ENCODE measurements at regions of chr19 and their contacts with region 1.

Region 1: DNA sequence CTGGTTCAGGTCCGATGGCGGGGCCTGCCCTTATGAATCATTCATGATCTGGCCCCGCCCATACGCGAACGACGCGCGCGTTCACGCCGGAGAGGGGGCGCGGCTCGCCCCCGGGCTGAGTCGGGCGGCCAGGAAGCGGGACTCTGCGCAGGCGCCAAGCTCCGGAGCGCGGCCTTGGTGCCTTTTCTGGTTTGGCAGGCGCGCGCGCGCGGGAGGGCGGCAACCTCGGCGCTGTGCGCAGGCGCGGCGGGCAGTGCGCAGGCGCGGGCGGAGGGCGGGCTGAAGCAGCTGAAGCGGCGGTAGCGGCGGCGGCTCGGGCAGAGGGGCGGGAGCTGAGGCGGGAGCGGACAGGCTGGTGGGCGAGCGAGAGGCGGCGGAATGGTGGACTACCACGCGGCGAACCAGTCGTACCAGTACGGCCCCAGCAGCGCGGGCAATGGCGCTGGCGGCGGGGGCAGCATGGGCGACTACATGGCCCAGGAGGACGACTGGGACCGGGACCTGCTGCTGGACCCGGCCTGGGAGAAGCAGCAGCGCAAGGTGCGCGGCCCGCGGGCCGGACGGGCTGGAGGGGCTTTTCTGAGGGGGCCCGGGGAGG is at the start of gene ACTN4:
- DNase-seq: peak; percentile 98 to 100 (median 100)
- ATAC-seq: peak; percentile 98
- H3K4me3 ChIP-seq: peak within 1 kb of the TSS; percentile 85
- H3K4me3 Mint-ChIP-seq: peak within 1 kb of the TSS; percentile 74 to 99 (median 89)
- H3K27ac ChIP-seq: peak within 1 kb of the TSS; percentile 69
- H3K27ac Mint-ChIP-seq: peak within 1 kb of the TSS; percentile 74 to 87 (median 84)
- H3K4me1 ChIP-seq: peaks cover 20 to 27% of the 10 kb centered on the region in 2 donors
- H3K4me1 Mint-ChIP-seq: peaks cover 20 to 52% (median 33%) of the 10 kb centered on the region in 7 donors
- H3K27me3 ChIP-seq: peaks cover 0 to 17% of the 10 kb centered on the region in 2 donors
- H3K27me3 Mint-ChIP-seq: peaks cover 0 to 33% (median 19%) of the 10 kb centered on the region in 5 donors
- total RNA-seq, gene ACTN4: 49.2 to 355 (median 54.4) TPM

Region 2: DNA sequence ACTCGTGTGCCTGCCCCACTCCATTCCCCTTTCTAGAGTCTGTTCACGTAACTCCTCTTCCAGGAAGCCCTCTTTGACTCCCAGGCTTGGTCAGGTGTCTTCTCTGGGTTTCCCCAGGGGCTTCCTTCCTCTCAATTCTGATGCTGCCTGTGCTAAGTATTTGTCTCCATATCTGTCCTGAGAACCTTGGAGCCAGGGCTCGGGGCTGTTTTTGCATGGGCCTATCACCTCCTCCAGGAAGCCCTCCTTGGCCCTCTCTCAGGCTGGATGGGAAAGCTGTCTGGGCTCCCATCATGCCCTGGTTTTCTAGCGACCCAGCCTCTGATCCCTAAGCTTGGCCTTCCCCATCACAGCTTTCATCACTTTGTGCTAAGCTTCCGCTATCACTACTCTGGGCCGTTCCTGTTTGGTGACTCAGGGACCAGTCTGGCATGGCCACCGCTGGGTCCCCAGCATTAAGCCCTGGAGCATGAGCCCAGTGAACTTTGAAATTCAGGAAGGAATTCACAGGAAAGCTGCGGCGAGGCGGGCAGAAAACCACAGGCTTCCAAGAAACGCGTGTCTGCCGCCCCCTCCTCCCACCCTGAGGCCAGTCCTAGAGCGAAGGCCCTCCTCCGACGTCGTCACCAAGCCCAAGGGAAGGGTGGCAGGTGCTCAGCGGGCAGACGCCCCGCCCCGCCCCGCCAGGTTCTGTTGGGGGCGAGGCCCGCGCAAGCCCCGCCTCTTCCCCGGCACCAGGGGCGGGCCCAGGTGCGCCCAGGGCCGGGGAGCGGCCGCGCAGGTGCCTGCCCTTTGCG is 383.6 kb before region 1 on chr19:
- CTCF ChIA-PET with region 1: no interaction called
- POLR2A ChIA-PET with region 1: no interaction called
- intact Hi-C with region 1: loop called in 1 of 2 experiments (anchors 1 kb)
- DNase-seq: peak; percentile 71 to 89 (median 80)
- ATAC-seq: peak; percentile 93
- H3K4me3 ChIP-seq: peak overlapping the region; percentile 77
- H3K4me3 Mint-ChIP-seq: peak overlapping the region; percentile 81 to 93 (median 88)
- H3K27ac ChIP-seq: peak overlapping the region; percentile 77
- H3K27ac Mint-ChIP-seq: peak overlapping the region in 8 of 9 donors; percentile 52 to 93 (median 70)
- H3K4me1 ChIP-seq: peaks cover 4 to 10% of the 10 kb centered on the region in 2 donors
- H3K4me1 Mint-ChIP-seq: peaks cover 17 to 44% (median 39%) of the 10 kb centered on the region in 7 donors
- H3K27me3 ChIP-seq: no peaks in the 10 kb centered on the region
- H3K27me3 Mint-ChIP-seq: peaks cover 0 to 5% (median 2%) of the 10 kb centered on the region in 5 donors

Region 3: GRCh38 chr19:38658462-38659306 is 11.2 kb after region 1 on chr19:
- CTCF ChIA-PET with region 1: no interaction called
- POLR2A ChIA-PET with region 1: interaction called, 18 read pairs
- intact Hi-C with region 1: loop called (anchors 1 kb)
- DNase-seq: no peak
- ATAC-seq: no peak
- H3K4me3 ChIP-seq: no peak overlapping the region
- H3K4me3 Mint-ChIP-seq: peak overlapping the region in 4 of 10 donors; percentile 9 to 76 (median 20)
- H3K27ac ChIP-seq: no peak overlapping the region
- H3K27ac Mint-ChIP-seq: no peak overlapping the region
- H3K4me1 ChIP-seq: peaks cover 36 to 67% of the 10 kb centered on the region in 2 donors
- H3K4me1 Mint-ChIP-seq: peaks cover 22 to 73% (median 50%) of the 10 kb centered on the region in 7 donors
- H3K27me3 ChIP-seq: peaks cover 0 to 19% of the 10 kb centered on the region in 2 donors
- H3K27me3 Mint-ChIP-seq: peaks cover 0 to 65% (median 34%) of the 10 kb centered on the region in 5 donors

Region 4: GRCh38 chr19:38736413-38737280 is 89.2 kb after region 1 on chr19:
- CTCF ChIA-PET with region 1: no interaction called
- POLR2A ChIA-PET with region 1: no interaction called
- intact Hi-C with region 1: loop called in 1 of 2 experiments (anchors 5 kb)
- DNase-seq: peak in 6 of 9 donors; percentile 31 to 69 (median 41)
- ATAC-seq: peak; percentile 63
- H3K4me3 ChIP-seq: peak overlapping the region; percentile 24
- H3K4me3 Mint-ChIP-seq: peak overlapping the region; percentile 35 to 83 (median 62)
- H3K27ac ChIP-seq: no peak overlapping the region
- H3K27ac Mint-ChIP-seq: peak overlapping the region in 5 of 9 donors; percentile 13 to 76 (median 36)
- H3K4me1 ChIP-seq: peaks cover 15 to 27% of the 10 kb centered on the region in 2 donors
- H3K4me1 Mint-ChIP-seq: peaks cover 7 to 47% (median 29%) of the 10 kb centered on the region in 7 donors
- H3K27me3 ChIP-seq: no peaks in the 10 kb centered on the region
- H3K27me3 Mint-ChIP-seq: peaks cover 0 to 10% (median 0%) of the 10 kb centered on the region in 5 donors

Region 5: DNA sequence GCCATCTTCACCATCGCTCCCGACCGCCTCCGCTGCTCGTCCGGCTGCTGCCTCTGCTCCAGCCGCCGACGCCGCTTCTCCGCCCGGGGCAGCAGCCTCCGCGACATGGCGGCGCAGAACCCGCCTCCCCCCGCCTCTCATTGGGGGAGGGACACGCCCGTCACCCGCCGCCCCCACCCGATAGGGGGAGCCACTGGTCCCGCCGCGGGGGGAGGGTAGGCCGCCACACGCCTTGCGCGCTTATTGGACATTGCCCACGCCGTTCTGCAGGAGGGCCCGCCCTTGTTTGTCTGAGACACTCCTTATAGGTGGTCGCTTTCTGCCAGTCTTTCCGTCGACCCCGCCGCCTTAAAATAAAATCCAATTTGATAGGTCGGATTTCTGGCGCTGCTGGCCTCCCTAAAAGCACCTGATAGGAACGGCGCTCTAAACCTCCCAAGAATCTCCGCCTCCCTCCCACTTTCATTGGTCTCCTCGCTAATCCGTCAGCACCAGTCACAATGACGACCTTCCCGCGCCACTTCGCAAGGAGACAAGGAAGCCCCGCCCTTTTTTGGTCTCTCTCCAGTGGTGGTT is 202.5 kb after region 1 on chr19 and contains the start of gene HNRNPL:
- CTCF ChIA-PET with region 1: no interaction called
- POLR2A ChIA-PET with region 1: interaction called, 6 read pairs
- intact Hi-C with region 1: loop called (anchors 1 to 2 kb)
- DNase-seq: peak; percentile 99 to 100 (median 100)
- ATAC-seq: peak; percentile 78
- H3K4me3 ChIP-seq: peak within 1 kb of the TSS; percentile 81
- H3K4me3 Mint-ChIP-seq: peak within 1 kb of the TSS; percentile 88 to 99 (median 96)
- H3K27ac ChIP-seq: peak within 1 kb of the TSS; percentile 96
- H3K27ac Mint-ChIP-seq: peak within 1 kb of the TSS; percentile 94 to 100 (median 99)
- H3K4me1 ChIP-seq: peaks cover 24 to 41% of the 10 kb centered on the region in 2 donors
- H3K4me1 Mint-ChIP-seq: peaks cover 30 to 67% (median 50%) of the 10 kb centered on the region in 7 donors
- H3K27me3 ChIP-seq: no peaks in the 10 kb centered on the region
- H3K27me3 Mint-ChIP-seq: peaks cover 0 to 5% (median 0%) of the 10 kb centered on the region in 5 donors
- total RNA-seq, gene HNRNPL: 339 to 539 (median 505) TPM

Region 6: GRCh38 chr19:38899447-38900219 is 252.2 kb after region 1 on chr19 and contains the starts of genes NFKBIB and SIRT2:
- CTCF ChIA-PET with region 1: interaction called, 3 read pairs
- POLR2A ChIA-PET with region 1: no interaction called
- intact Hi-C with region 1: loop called in 1 of 2 experiments (anchors 1 kb)
- DNase-seq: peak; percentile 86 to 100 (median 99)
- ATAC-seq: peak; percentile 93
- H3K4me3 ChIP-seq: peak within 1 kb of the TSS; percentile 74
- H3K4me3 Mint-ChIP-seq: peak within 1 kb of the TSS; percentile 88 to 100 (median 96)
- H3K27ac ChIP-seq: peak within 1 kb of the TSS; percentile 97
- H3K27ac Mint-ChIP-seq: peak within 1 kb of the TSS; percentile 86 to 99 (median 94)
- H3K4me1 ChIP-seq: peaks cover 15 to 29% of the 10 kb centered on the region in 2 donors
- H3K4me1 Mint-ChIP-seq: peaks cover 27 to 74% (median 50%) of the 10 kb centered on the region in 7 donors
- H3K27me3 ChIP-seq: no peaks in the 10 kb centered on the region
- H3K27me3 Mint-ChIP-seq: no peaks in the 10 kb centered on the region
- total RNA-seq, gene NFKBIB: 21.7 to 51.8 (median 34.1) TPM
- total RNA-seq, gene SIRT2: 42.9 to 78.5 (median 54.0) TPM